Activated CD8-positive, alpha-beta memory T cell treated with anti-CD3 and anti-CD28 coated beads, Interleukin-2, amount 10 ng/mL, durations not matched to agents 7 days and 5 days (primary cell): ENCODE measurements at regions of chr5 and their contacts with region 1.

Region 1: DNA sequence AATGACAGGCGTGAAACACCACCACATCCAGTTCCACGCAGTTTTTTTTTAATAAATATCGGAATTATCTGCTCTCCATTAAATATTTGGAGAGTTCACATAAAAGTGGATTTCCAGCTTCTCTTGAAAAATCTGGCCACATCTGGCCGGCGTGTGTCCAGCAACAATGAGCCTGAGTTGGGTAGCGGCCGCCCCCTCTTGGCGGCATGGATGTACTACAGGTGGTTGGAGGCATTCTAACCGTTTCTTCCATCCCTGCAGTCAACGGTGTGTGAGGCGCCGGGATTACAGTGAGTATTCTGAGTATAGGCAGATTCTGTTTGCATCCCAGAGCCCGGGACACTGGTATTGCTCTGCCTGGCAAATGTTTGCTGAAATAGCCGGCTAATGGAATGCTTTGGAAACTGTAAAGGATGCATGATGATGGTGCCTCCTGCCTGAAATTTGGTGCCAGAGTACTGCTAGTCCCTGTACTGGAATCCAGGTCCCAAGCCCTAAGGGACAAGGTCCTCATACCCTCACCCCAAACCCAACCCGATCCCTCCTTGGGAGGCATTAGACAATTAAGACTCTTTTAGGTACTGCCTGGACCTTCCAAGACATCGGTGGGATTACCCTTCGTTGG is 13.6 kb upstream of the GM2A start:
- DNase-seq: peak; percentile 73
- ATAC-seq: peak; percentile 73
- H3K4me3 Mint-ChIP-seq: peak overlapping the region; percentile 63
- H3K27ac Mint-ChIP-seq: peak overlapping the region; percentile 33
- H3K4me1 Mint-ChIP-seq: peaks cover 56% of the 10 kb centered on the region
- H3K27me3 Mint-ChIP-seq: no peaks in the 10 kb centered on the region

Region 2: DNA sequence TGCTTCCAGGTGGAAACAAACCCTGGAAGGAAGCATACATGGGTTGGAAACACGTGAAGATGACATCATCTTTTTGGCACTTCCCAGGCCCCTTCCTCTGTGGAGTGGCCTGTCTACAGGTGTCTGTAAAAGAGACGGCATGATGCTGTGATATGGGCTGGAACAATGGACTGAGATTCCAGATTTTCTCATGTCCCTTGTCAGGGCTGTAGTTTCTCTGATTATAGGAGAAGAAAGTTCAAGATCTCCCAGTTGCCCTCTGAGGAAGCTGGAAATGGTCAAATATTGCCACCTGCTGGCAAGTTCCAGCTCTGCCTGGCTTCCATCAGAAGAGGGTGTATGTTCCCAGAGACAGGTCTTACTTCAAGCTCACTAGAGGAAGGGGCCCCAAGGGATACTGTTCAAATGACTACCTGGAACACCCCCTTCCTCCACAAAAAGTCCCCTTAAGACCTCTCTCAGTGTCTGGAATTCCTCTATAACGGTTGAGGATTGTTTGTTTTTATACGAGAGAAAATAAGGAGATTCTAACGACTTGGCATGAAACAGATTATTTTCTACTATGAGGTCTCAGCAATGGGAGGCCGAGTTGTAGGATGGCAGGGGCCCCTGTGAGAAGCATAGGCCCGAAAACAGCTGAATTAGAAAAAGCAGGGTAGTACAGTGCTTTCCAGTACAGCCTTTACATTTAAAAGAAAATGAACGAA is 74.5 kb before region 1 on chr5:
- CTCF ChIA-PET with region 1: interaction called, 30 read pairs
- DNase-seq: peak; percentile 86
- ATAC-seq: peak; percentile 98
- H3K4me3 Mint-ChIP-seq: no peak overlapping the region
- H3K27ac Mint-ChIP-seq: no peak overlapping the region
- H3K4me1 Mint-ChIP-seq: peaks cover 4% of the 10 kb centered on the region
- H3K27me3 Mint-ChIP-seq: no peaks in the 10 kb centered on the region

Region 3: GRCh38 chr5:151171529-151171928 is 67.8 kb before region 1 on chr5:
- CTCF ChIA-PET with region 1: interaction called, 30 read pairs
- DNase-seq: no peak
- ATAC-seq: no peak
- H3K4me3 Mint-ChIP-seq: no peak overlapping the region
- H3K27ac Mint-ChIP-seq: no peak overlapping the region
- H3K4me1 Mint-ChIP-seq: peaks cover 12% of the 10 kb centered on the region
- H3K27me3 Mint-ChIP-seq: no peaks in the 10 kb centered on the region

Region 4: GRCh38 chr5:151213800-151214613 is 25.3 kb before region 1 on chr5:
- CTCF ChIA-PET with region 1: interaction called, 29 read pairs
- DNase-seq: peak; percentile 96
- ATAC-seq: peak; percentile 86
- H3K4me3 Mint-ChIP-seq: peak overlapping the region; percentile 86
- H3K27ac Mint-ChIP-seq: peak overlapping the region; percentile 98
- H3K4me1 Mint-ChIP-seq: peaks cover 78% of the 10 kb centered on the region
- H3K27me3 Mint-ChIP-seq: no peaks in the 10 kb centered on the region

Region 5: GRCh38 chr5:151223469-151224264 is 15.7 kb before region 1 on chr5 and contains the start of gene CCDC69:
- CTCF ChIA-PET with region 1: interaction called, 49 read pairs
- DNase-seq: peak; percentile 76
- ATAC-seq: peak; percentile 77
- H3K4me3 Mint-ChIP-seq: peak within 1 kb of the TSS; percentile 93
- H3K27ac Mint-ChIP-seq: peak within 1 kb of the TSS; percentile 91
- H3K4me1 Mint-ChIP-seq: peaks cover 52% of the 10 kb centered on the region
- H3K27me3 Mint-ChIP-seq: no peaks in the 10 kb centered on the region
- total RNA-seq, gene CCDC69: 73.1 to 89.1 TPM

Region 6: GRCh38 chr5:151252762-151253604 is 13.6 kb after region 1 on chr5 and contains the start of gene GM2A:
- CTCF ChIA-PET with region 1: interaction called, 26 read pairs
- DNase-seq: peak; percentile 100
- ATAC-seq: peak; percentile 95
- H3K4me3 Mint-ChIP-seq: peak within 1 kb of the TSS; percentile 92
- H3K27ac Mint-ChIP-seq: peak within 1 kb of the TSS; percentile 86
- H3K4me1 Mint-ChIP-seq: peaks cover 28% of the 10 kb centered on the region
- H3K27me3 Mint-ChIP-seq: no peaks in the 10 kb centered on the region
- total RNA-seq, gene GM2A: 13.4 to 18.7 TPM

Region 7: GRCh38 chr5:151264113-151264512 is 24.8 kb after region 1 on chr5:
- CTCF ChIA-PET with region 1: no interaction called
- DNase-seq: no peak
- ATAC-seq: peak; percentile 75
- H3K4me3 Mint-ChIP-seq: no peak overlapping the region
- H3K27ac Mint-ChIP-seq: peak overlapping the region; percentile 64
- H3K4me1 Mint-ChIP-seq: peaks cover 12% of the 10 kb centered on the region
- H3K27me3 Mint-ChIP-seq: no peaks in the 10 kb centered on the region

Region 8: GRCh38 chr5:151374539-151374938 is 135.2 kb after region 1 on chr5:
- CTCF ChIA-PET with region 1: no interaction called
- DNase-seq: no peak
- ATAC-seq: no peak
- H3K4me3 Mint-ChIP-seq: no peak overlapping the region
- H3K27ac Mint-ChIP-seq: no peak overlapping the region
- H3K4me1 Mint-ChIP-seq: no peaks in the 10 kb centered on the region
- H3K27me3 Mint-ChIP-seq: peaks cover 2% of the 10 kb centered on the region